GM12878 (cell line): ENCODE measurements at regions of chr20 and their contacts with region 1.

Region 1: GRCh38 chr20:20412750-20413149 is 44.8 kb downstream of the INSM1 start:
- DNase-seq: no peak
- ATAC-seq: no peak
- H3K4me3 ChIP-seq: no peak overlapping the region
- H3K27ac ChIP-seq: no peak overlapping the region
- H3K4me1 ChIP-seq: no peaks in the 10 kb centered on the region
- H3K27me3 ChIP-seq: no peaks in the 10 kb centered on the region
- CTCF ChIP-seq: no peak
- EP300 ChIP-seq: no peak
- POLR2A ChIP-seq: no peak
- RAD21 ChIP-seq: no peak

Region 2: DNA sequence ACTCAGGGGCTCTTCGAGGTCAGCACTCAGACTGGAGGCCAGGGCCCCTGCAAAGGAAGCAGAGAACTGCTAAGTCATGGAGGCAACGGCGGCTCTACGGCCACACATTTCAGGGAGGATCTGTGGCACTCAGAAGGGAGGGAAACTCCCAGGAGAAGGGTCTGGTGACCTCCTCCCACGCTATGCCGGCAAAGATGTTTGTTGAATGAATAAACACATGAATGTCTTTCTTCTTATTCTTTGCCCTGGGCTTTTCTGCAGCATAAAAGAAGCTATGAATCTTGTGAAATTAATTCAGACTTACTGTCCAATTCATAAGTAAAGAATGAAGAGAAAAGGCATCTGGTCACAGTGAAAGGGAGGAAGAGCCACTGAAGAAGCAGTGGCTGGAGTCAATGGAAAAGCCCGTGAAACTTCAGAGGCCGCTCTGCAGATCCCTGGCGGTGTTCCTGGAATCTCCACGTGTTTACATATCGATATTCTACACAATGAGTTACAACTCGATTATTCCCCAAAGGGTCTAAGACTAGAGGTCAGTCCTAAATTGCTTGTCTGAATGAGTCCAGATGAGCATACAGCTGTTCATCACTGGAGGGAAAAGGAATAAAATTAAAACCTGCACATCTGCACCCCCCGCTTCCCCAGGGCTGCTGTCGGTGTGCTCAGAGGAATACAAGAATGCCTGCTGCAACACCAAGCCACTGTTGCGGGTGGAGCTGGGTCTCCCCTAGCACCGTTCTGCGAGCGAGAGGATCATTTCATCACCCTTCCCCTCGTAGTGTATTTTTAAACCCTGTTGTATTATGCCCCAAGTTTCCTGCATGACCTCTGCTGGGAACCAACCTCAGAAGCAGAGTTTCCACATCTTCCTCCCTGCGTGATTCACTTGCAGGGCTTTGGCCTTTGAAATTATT is 19.3 kb before region 1 on chr20:
- CTCF ChIA-PET with region 1: no interaction called
- POLR2A ChIA-PET with region 1: no interaction called
- RAD21 ChIA-PET with region 1: no interaction called
- SMC1A ChIA-PET with region 1: interaction called, 3 read pairs
- in situ Hi-C with region 1: no loop called
- intact Hi-C with region 1: loop called (anchors 2 kb)
- DNase-seq: no peak
- ATAC-seq: no peak
- H3K4me3 ChIP-seq: no peak overlapping the region
- H3K27ac ChIP-seq: no peak overlapping the region
- H3K4me1 ChIP-seq: no peaks in the 10 kb centered on the region
- H3K27me3 ChIP-seq: no peaks in the 10 kb centered on the region
- CTCF ChIP-seq: no peak
- EP300 ChIP-seq: no peak
- POLR2A ChIP-seq: no peak
- RAD21 ChIP-seq: no peak

Region 3: DNA sequence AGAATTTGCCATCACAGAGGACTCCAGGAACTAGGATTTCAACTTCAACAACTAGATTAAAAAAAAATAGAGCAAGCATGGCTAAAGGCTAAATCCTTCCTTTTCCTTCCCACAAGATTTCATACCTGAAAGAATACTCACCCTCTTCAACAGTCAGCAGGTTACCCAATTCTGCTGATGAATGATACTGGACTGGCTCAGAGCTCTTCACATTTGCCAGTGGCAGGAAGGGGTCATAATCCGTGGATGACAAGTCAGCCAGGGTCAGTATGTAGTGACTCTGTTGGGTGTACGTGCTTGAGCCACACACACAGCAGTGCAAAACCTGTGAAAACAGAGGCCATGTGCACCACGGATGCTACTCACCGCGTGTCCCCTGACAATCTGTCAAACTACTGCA is 108.0 kb after region 1 on chr20:
- CTCF ChIA-PET with region 1: no interaction called
- POLR2A ChIA-PET with region 1: no interaction called
- RAD21 ChIA-PET with region 1: no interaction called
- SMC1A ChIA-PET with region 1: no interaction called
- in situ Hi-C with region 1: no loop called
- intact Hi-C with region 1: no loop called
- DNase-seq: no peak
- ATAC-seq: no peak
- H3K4me3 ChIP-seq: no peak overlapping the region
- H3K27ac ChIP-seq: no peak overlapping the region
- H3K4me1 ChIP-seq: no peaks in the 10 kb centered on the region
- H3K27me3 ChIP-seq: no peaks in the 10 kb centered on the region
- CTCF ChIP-seq: no peak
- EP300 ChIP-seq: no peak
- POLR2A ChIP-seq: no peak
- RAD21 ChIP-seq: no peak

Region 4: GRCh38 chr20:20680991-20681508 is 268.3 kb after region 1 on chr20:
- CTCF ChIA-PET with region 1: no interaction called
- POLR2A ChIA-PET with region 1: no interaction called
- RAD21 ChIA-PET with region 1: no interaction called
- SMC1A ChIA-PET with region 1: no interaction called
- in situ Hi-C with region 1: no loop called
- intact Hi-C with region 1: no loop called
- DNase-seq: no peak
- ATAC-seq: peak; percentile 71
- H3K4me3 ChIP-seq: peak overlapping the region; percentile 21; the same call in 1 of the 2 replicates
- H3K27ac ChIP-seq: peak overlapping the region; percentile 67
- H3K4me1 ChIP-seq: peaks cover 17% of the 10 kb centered on the region
- H3K27me3 ChIP-seq: no peaks in the 10 kb centered on the region
- CTCF ChIP-seq: no peak
- EP300 ChIP-seq: no peak
- POLR2A ChIP-seq: peak; percentile 24; the same call in 1 of the 2 replicates
- RAD21 ChIP-seq: no peak